Calu3 (cell line): ENCODE measurements at regions of chr6 and their contacts with region 1.

Region 1: GRCh38 chr6:2988426-2989331 is 11.0 kb upstream of the NQO2 start:
- DNase-seq: peak; percentile 89
- H3K4me3 Mint-ChIP-seq: peak overlapping the region; percentile 71
- H3K27ac Mint-ChIP-seq: peak overlapping the region; percentile 83
- H3K4me1 Mint-ChIP-seq: peaks cover 49% of the 10 kb centered on the region
- H3K27me3 Mint-ChIP-seq: no peaks in the 10 kb centered on the region
- CTCF ChIP-seq: peak; percentile 67

Region 2: GRCh38 chr6:2846873-2847224 is 141.8 kb before region 1 on chr6:
- CTCF ChIA-PET with region 1: interaction called, 7 read pairs
- intact Hi-C with region 1: loop called (anchors 2 kb)
- DNase-seq: no peak
- H3K4me3 Mint-ChIP-seq: peak overlapping the region; percentile 41
- H3K27ac Mint-ChIP-seq: peak overlapping the region; percentile 96
- H3K4me1 Mint-ChIP-seq: peaks cover 22% of the 10 kb centered on the region
- H3K27me3 Mint-ChIP-seq: no peaks in the 10 kb centered on the region
- CTCF ChIP-seq: no peak

Region 3: GRCh38 chr6:2952557-2953095 is 36.1 kb before region 1 on chr6:
- CTCF ChIA-PET with region 1: interaction called, 81 read pairs
- intact Hi-C with region 1: loop called (anchors 1 kb)
- DNase-seq: peak; percentile 76
- H3K4me3 Mint-ChIP-seq: no peak overlapping the region
- H3K27ac Mint-ChIP-seq: no peak overlapping the region
- H3K4me1 Mint-ChIP-seq: no peaks in the 10 kb centered on the region
- H3K27me3 Mint-ChIP-seq: no peaks in the 10 kb centered on the region
- CTCF ChIP-seq: peak; percentile 90

Region 4: GRCh38 chr6:2999618-3000557 is 11.2 kb after region 1 on chr6 and contains the start of gene NQO2:
- CTCF ChIA-PET with region 1: interaction called, 11 read pairs
- intact Hi-C with region 1: no loop called
- DNase-seq: peak; percentile 89
- H3K4me3 Mint-ChIP-seq: peak within 1 kb of the TSS; percentile 86
- H3K27ac Mint-ChIP-seq: no peak within 1 kb of the TSS
- H3K4me1 Mint-ChIP-seq: no peaks in the 10 kb centered on the region
- H3K27me3 Mint-ChIP-seq: no peaks in the 10 kb centered on the region
- CTCF ChIP-seq: no peak
- total RNA-seq, gene NQO2: 11.5 and 12.0 TPM in 2 replicates